Sigmoid colon (tissue), 7 donors: ENCODE measurements at regions of chr2 and their contacts with region 1.

Region 1: GRCh38 chr2:179264368-179265081 is at the start of gene SESTD1:
- DNase-seq: peak; percentile 85
- H3K4me3 ChIP-seq: peak within 1 kb of the TSS; percentile 64 to 81 (median 78)
- H3K27ac ChIP-seq: peak within 1 kb of the TSS; percentile 87 to 91 (median 90)
- H3K4me1 ChIP-seq: peaks cover 0 to 33% (median 22%) of the 10 kb centered on the region in 4 donors
- H3K27me3 ChIP-seq: no peaks in the 10 kb centered on the region
- CTCF ChIP-seq: no peak
- EP300 ChIP-seq: no peak
- POLR2A ChIP-seq: no peak
- total RNA-seq, gene SESTD1: 31.0 to 52.3 (median 41.0) TPM

Region 2: GRCh38 chr2:178679891-178680290 is 584.6 kb before region 1 on chr2:
- intact Hi-C with region 1: no loop called
- DNase-seq: no peak
- H3K4me3 ChIP-seq: no peak overlapping the region
- H3K27ac ChIP-seq: no peak overlapping the region
- H3K4me1 ChIP-seq: no peaks in the 10 kb centered on the region
- H3K27me3 ChIP-seq: no peaks in the 10 kb centered on the region
- CTCF ChIP-seq: no peak
- EP300 ChIP-seq: no peak
- POLR2A ChIP-seq: no peak

Region 3: DNA sequence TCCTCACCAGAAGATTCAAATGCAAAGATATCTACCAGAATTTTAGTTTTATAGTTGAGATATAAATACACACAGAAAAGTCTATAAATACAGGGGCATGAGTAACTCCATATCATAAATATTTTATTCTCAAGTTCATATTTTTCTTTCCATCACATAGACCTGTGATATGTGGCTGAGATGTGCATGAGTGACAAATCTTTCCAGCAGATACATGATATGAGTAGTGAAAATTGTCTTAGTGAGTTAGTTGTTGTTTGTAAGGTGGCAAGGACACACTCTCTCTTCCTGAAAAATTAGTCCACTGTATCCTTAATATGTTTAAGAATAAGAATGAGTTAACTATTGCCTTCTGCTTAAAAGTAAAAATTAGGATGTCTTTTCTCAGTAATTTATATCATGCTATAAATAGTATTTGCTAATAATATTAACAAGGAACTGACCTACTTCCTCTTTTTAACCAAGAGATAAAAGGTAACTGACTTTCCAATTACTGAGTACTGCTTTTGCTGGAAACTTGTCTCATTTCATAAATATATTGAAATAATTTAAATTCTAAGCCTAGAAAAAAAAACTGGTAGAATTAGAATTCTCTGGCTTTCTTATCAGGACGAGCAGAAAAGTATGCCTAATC is 85.3 kb after region 1 on chr2:
- intact Hi-C with region 1: loop called (anchors 5 kb)
- DNase-seq: no peak
- H3K4me3 ChIP-seq: no peak overlapping the region
- H3K27ac ChIP-seq: peak overlapping the region in 1 of 4 donors; percentile 11
- H3K4me1 ChIP-seq: peaks cover 0 to 18% (median 6%) of the 10 kb centered on the region in 4 donors
- H3K27me3 ChIP-seq: no peaks in the 10 kb centered on the region
- CTCF ChIP-seq: no peak
- EP300 ChIP-seq: no peak
- POLR2A ChIP-seq: no peak